Calu3 (cell line): ENCODE measurements at regions of chr2 and their contacts with region 1.

Region 1: DNA sequence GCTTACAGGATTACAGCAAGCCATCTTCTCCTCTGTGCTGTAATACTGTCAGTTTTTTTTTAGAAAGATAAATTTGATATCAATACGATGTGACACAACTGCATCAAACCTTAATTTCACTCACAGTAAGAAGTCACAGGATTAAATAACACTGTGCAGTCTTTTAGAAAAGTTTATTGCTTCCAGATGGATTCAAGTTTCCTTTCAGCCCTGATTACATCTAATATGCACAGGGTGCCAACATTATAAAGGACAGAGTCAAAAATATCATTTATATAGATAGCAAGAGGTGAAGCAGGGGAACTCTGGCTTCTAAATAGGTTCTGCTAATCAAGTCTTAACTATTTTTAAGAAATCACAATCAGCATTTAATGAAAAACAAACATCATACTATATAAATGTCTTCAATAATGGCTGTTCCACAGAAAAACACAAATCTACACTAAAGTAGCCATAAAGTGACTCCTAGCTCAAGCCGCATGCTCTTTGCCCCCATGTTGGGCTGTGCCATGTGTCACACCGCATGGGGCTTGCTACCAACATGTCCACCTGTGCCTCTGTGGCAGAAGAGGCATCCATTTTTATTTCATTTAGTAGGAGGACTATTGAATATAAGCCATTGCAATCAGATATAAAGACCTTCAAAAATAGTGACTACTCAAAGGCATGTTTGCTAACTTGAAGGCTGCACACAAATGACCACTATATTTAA is 35.0 kb downstream of the CERKL start:
- DNase-seq: no peak
- H3K4me3 Mint-ChIP-seq: no peak overlapping the region
- H3K27ac Mint-ChIP-seq: no peak overlapping the region
- H3K4me1 Mint-ChIP-seq: peaks cover 9% of the 10 kb centered on the region
- H3K27me3 Mint-ChIP-seq: no peaks in the 10 kb centered on the region
- CTCF ChIP-seq: no peak

Region 2: DNA sequence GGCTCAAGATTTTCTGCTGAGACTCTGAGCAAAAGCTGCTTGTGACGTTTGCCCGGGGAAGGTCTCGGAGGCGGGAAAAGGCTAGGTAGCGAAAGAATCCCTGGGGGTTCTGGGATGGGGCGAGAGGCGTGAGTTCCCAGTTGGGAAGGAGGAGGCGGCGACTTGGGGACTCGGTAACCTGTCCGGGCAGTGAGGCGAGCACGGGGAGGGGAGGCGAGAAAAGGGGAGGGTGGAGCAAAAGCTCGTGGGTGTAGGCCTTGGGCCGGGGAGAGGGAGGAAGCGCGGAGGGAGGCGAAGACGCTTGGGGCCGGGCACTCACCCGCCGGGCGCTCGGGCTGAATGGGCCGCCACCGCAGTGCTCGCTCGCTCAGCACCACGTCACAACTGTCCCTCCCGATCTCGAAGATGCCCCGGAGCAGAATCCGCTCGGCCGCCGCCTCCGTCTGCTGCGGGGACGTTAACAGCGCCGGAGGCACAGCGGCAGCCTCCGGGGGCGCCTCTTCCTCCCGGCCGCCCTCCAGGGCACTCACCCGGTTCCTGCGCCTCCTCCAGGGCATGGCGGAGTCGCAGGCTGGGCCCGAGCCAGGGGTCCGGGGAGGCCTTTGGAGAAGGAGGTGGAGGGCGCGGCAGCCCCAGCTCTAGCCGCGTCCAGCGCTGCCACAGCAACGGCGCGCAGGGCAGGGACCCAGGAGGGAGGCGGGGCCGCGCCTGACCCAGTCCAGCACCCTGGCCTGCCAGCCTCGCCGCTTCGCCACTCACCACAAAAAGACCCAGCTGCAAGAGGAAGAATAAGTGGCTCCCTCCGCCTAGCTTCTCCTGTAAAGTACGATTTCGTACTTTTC is 34.7 kb after region 1 on chr2 and contains the start of gene CERKL:
- CTCF ChIA-PET with region 1: no interaction called
- intact Hi-C with region 1: loop called (anchors 5 kb)
- DNase-seq: peak; percentile 83
- H3K4me3 Mint-ChIP-seq: peak within 1 kb of the TSS; percentile 88
- H3K27ac Mint-ChIP-seq: peak within 1 kb of the TSS; percentile 73
- H3K4me1 Mint-ChIP-seq: peaks cover 10% of the 10 kb centered on the region
- H3K27me3 Mint-ChIP-seq: no peaks in the 10 kb centered on the region
- CTCF ChIP-seq: no peak
- total RNA-seq, gene CERKL: 1.1 and 1.5 TPM in 2 replicates